ENCODE measurements at regions of chr19 and their contacts with region 1.

Region 1: DNA sequence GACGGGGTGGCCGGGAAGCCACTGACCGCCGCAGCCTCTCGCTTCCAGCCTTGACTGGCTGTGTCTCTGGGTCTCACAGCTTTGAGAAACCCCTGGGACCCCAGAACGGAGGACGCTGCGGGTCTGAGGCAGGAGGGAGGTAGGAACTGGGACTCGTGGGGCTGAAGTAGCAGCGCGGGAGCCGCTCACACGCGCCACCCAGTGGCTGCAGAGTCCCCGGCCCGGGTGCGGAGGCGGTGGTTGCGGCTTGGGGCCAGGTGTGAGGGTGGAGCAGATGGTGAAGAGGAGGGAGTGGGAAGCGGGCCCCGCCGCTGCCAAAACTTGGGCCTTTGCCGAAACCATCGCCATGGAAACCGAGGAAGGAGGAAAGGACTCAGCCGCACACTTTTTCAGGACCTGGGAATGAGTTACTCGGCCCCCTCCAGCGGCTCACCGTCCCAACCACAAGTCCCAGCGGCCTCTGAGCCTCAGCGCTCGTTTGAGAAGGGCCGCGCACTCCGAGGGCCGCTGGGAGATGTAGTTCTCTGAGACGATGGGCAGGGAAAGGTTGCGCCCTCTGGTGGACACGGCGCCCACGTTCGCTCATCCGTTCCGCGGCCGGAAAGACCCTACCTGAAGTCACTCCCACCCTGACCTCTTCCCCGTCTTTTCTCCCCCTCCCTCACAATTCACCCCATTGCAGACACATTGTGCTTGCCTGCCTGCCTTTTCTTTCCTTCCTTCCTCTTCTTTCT is 2.2 kb upstream of the SLC17A7 start:
- DNase-seq: peak; percentile 92 to 97 (median 95)
- ATAC-seq: peak; percentile 90 to 95 (median 92)
- H3K4me3 ChIP-seq: peak overlapping the region; percentile 33 to 66 (median 49)
- H3K27ac ChIP-seq: peak overlapping the region; percentile 25 to 55 (median 35)
- H3K4me1 ChIP-seq: no peaks in the 10 kb centered on the region
- H3K27me3 ChIP-seq: no peaks in the 10 kb centered on the region
- CTCF ChIP-seq: peak; percentile 59 to 87 (median 76)

Region 2: GRCh38 chr19:49224856-49225255 is 218.7 kb before region 1 on chr19:
- intact Hi-C with region 1: loop called in 1 of 3 experiments (anchors 10 kb)
- DNase-seq: peak; percentile 39 to 73 (median 52)
- ATAC-seq: peak in 3 of 4 donors; percentile 94 to 95 (median 95)
- H3K4me3 ChIP-seq: no peak overlapping the region
- H3K27ac ChIP-seq: no peak overlapping the region
- H3K4me1 ChIP-seq: no peaks in the 10 kb centered on the region
- H3K27me3 ChIP-seq: no peaks in the 10 kb centered on the region
- CTCF ChIP-seq: peak in 1 of 4 donors; percentile 15

Region 3: GRCh38 chr19:49391581-49392399 is 51.7 kb before region 1 on chr19:
- intact Hi-C with region 1: loop called (anchors 5 to 10 kb)
- DNase-seq: peak; percentile 73 to 92 (median 82)
- ATAC-seq: peak; percentile 62 to 89 (median 76)
- H3K4me3 ChIP-seq: peak overlapping the region in 1 of 4 donors; percentile 32
- H3K27ac ChIP-seq: peak overlapping the region; percentile 65 to 85 (median 76)
- H3K4me1 ChIP-seq: peaks cover 3 to 5% (median 5%) of the 10 kb centered on the region in 3 donors
- H3K27me3 ChIP-seq: no peaks in the 10 kb centered on the region
- CTCF ChIP-seq: peak; percentile 61 to 76 (median 74)

Region 4: GRCh38 chr19:49487277-49488045 is 43.9 kb after region 1 on chr19 and contains the start of gene RPL13A:
- intact Hi-C with region 1: no loop called
- DNase-seq: peak; percentile 100
- ATAC-seq: peak; percentile 92 to 96 (median 94)
- H3K4me3 ChIP-seq: peak within 1 kb of the TSS; percentile 86 to 89 (median 88)
- H3K27ac ChIP-seq: peak within 1 kb of the TSS; percentile 69 to 85 (median 82)
- H3K4me1 ChIP-seq: peaks cover 12 to 20% (median 14%) of the 10 kb centered on the region in 3 donors
- H3K27me3 ChIP-seq: no peaks in the 10 kb centered on the region
- CTCF ChIP-seq: no peak
- total RNA-seq, gene RPL13A: 1,459 to 2,866 (median 2,217) TPM

Region 5: GRCh38 chr19:49655570-49656455 is 212.3 kb after region 1 on chr19:
- intact Hi-C with region 1: no loop called
- DNase-seq: peak in 1 of 6 donors; percentile 52
- ATAC-seq: no peak
- H3K4me3 ChIP-seq: no peak overlapping the region
- H3K27ac ChIP-seq: no peak overlapping the region
- H3K4me1 ChIP-seq: no peaks in the 10 kb centered on the region
- H3K27me3 ChIP-seq: no peaks in the 10 kb centered on the region
- CTCF ChIP-seq: no peak